CD8-positive, alpha-beta T cell (primary cell): ENCODE measurements at regions of chr9 and their contacts with region 1.

Region 1: DNA sequence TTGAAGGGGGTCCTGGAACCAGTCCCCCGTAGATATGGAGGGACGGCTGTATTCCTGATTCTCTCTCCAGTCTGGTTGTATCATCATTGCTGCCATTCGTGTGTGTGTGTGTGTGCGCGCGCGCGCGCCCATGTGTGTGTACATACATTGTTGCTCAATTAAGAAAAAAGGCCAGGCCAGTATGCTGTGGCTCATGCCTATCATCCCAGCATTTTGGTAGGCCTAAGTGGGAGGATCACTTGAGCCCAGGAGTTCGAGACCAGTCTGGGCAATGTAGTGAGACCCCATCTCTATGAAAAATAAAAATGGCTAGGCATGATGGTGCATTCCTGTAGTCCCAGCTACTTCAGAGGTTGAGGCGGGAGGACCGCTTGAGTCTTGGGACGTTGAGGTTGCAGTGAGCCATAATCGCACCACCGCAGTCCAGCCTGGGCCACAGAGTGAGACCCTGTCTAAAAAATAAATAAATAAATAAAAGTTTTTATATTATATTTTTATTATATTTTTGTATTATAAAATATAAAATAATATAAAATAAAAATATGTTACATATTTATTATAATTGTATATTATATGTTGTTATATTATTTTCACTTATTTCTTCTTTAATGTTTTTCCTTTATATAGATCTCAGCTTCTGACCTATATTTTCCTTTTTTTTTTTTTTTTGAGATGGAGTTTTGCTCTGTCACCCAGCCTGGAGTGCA is 53.2 kb downstream of the SPIN1 start:
- DNase-seq: no peak
- ATAC-seq: no peak
- H3K4me3 ChIP-seq: no peak overlapping the region
- H3K4me3 Mint-ChIP-seq: no peak overlapping the region
- H3K27ac ChIP-seq: no peak overlapping the region
- H3K27ac Mint-ChIP-seq: no peak overlapping the region
- H3K4me1 ChIP-seq: peaks cover 10% of the 10 kb centered on the region
- H3K4me1 Mint-ChIP-seq: peaks cover 47% of the 10 kb centered on the region
- H3K27me3 ChIP-seq: no peaks in the 10 kb centered on the region
- H3K27me3 Mint-ChIP-seq: no peaks in the 10 kb centered on the region
- CTCF ChIP-seq: no peak

Region 2: DNA sequence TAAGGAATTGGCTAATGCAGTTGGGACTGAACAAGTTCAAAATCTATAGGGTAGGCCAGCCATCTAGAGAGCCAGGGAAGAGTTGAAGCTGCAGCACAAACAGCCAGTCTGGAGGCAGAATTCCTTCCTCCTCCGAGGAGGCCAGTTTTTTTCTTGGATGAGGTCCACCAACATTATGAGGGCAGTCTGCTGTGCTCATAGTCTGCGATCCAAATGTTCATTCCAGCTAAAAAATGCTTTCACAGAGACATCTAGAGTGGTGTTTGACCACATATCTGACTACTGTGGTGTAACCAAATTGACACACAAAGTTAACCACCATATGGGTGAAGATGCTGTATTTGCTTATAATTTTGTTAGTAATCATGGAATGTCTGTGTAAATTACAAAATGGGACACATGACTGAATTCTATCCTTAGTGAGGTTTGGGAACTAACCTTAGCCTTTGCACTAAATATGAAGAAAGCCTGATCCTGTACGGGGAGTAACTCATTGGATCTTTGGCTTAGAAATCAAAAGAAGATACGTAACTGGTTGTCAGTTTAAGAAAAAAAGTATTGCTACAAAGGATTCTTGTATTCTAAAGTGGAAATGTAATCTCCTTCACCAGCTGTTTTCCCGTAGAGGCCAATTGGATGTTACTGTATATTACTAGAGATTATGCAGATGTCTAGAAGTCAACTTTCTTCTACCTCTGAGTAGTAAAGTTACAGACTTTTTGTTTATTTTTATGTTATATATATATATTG is 17.4 kb after region 1 on chr9:
- CTCF ChIA-PET with region 1: no interaction called
- POLR2A ChIA-PET with region 1: no interaction called
- intact Hi-C with region 1: loop called in 1 of 2 experiments (anchors 1 kb)
- DNase-seq: no peak
- ATAC-seq: no peak
- H3K4me3 ChIP-seq: no peak overlapping the region
- H3K4me3 Mint-ChIP-seq: no peak overlapping the region
- H3K27ac ChIP-seq: no peak overlapping the region
- H3K27ac Mint-ChIP-seq: no peak overlapping the region
- H3K4me1 ChIP-seq: no peaks in the 10 kb centered on the region
- H3K4me1 Mint-ChIP-seq: no peaks in the 10 kb centered on the region
- H3K27me3 ChIP-seq: no peaks in the 10 kb centered on the region
- H3K27me3 Mint-ChIP-seq: no peaks in the 10 kb centered on the region
- CTCF ChIP-seq: no peak